ENCODE measurements at regions of chr6 and their contacts with region 1.

Region 1: GRCh38 chr6:26187981-26188635 is 100.9 kb downstream of the HFE start:
- H3K4me3 ChIP-seq: peak overlapping the region; percentile 57
- H3K27ac ChIP-seq: peak overlapping the region; percentile 35; the same call in 1 of the 2 replicates
- H3K4me1 ChIP-seq: no peaks in the 10 kb centered on the region
- CTCF ChIP-seq: no peak

Region 2: DNA sequence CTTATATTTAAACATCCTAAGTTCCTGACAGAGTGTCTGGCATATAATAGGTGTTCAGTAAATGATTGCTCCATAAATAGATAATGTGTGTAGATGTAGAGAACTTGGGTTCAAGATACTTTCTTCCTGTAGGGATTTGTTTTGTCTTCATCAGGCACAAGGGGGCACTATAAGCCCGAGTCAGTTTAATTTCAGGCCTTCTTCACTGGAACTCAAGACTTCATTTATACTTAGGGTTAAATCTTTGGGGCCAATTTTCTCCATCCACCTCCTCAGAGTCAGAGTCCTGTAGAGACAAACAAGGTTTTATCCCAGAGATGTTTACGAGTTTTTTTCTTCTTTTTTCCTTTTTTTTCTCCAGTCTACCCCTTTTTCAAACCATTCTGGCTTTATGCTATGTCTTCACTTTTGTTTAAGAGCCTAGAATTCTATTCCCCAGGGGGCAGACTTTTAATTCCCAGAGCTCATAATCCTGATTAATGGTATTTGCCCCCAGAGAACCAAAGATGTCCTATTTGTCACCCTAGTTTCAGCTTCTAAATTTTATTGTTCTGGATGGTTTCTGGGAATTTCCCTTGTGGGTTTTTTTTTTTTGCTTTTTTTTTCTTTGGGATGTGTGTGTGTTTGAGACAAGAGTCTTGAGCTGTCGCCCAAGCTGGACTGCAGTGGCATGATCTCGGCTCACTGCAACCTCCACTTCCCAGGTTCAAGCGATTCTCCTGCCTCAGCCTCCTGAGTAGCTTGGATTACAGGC is 12.5 kb before region 1 on chr6:
- CTCF ChIA-PET with region 1: interaction called, 12 read pairs
- POLR2A ChIA-PET with region 1: interaction called, 10 read pairs
- H3K4me3 ChIP-seq: no peak overlapping the region
- H3K27ac ChIP-seq: no peak overlapping the region
- H3K4me1 ChIP-seq: no peaks in the 10 kb centered on the region; the same call in 1 of the 2 replicates
- CTCF ChIP-seq: peak; percentile 39; the same call in 1 of the 2 replicates

Region 3: GRCh38 chr6:26204332-26205165 is 16.4 kb after region 1 on chr6:
- CTCF ChIA-PET with region 1: interaction called, 4 read pairs
- POLR2A ChIA-PET with region 1: interaction called, 49 read pairs
- H3K4me3 ChIP-seq: peak overlapping the region; percentile 73
- H3K27ac ChIP-seq: peak overlapping the region; percentile 71
- H3K4me1 ChIP-seq: no peaks in the 10 kb centered on the region
- CTCF ChIP-seq: peak; percentile 81

Region 4: DNA sequence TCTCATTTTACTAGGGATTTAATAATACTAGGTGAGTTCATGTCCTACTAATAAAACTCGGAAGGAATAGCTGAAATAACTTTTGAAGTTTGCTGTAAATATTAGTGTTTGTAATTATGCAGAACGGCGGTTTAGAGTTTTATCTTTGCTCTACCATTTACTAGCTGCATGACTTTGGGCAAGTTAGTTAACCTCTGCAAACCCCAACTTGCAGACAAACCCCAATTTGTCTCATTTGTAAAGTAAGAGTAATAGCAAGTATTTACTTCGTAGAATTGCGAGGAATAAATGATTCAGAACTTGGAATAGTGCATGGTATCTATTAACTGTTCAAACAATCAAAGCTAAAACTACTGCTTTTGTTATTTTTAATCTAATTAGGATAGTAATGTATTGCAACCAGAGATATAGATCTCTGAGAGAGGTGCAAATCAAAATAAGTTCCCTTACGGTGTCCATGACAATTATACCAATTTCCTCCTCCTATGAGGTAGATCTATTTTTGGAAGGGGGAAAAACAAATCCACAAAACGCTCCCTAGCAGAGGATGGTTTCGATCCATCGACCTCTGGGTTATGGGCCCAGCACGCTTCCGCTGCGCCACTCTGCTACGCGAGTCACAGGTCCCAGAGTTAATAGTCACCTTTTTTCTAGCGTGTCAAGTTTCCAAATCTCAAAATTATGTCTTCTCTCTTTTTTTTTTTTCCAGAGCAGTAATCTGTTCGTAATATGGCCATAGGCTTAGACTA is 141.8 kb after region 1 on chr6:
- CTCF ChIA-PET with region 1: interaction called, 3 read pairs
- POLR2A ChIA-PET with region 1: interaction called, 10 read pairs
- H3K4me3 ChIP-seq: peak overlapping the region; percentile 73
- H3K27ac ChIP-seq: no peak overlapping the region
- H3K4me1 ChIP-seq: no peaks in the 10 kb centered on the region; the same call in 1 of the 2 replicates
- CTCF ChIP-seq: no peak

Region 5: DNA sequence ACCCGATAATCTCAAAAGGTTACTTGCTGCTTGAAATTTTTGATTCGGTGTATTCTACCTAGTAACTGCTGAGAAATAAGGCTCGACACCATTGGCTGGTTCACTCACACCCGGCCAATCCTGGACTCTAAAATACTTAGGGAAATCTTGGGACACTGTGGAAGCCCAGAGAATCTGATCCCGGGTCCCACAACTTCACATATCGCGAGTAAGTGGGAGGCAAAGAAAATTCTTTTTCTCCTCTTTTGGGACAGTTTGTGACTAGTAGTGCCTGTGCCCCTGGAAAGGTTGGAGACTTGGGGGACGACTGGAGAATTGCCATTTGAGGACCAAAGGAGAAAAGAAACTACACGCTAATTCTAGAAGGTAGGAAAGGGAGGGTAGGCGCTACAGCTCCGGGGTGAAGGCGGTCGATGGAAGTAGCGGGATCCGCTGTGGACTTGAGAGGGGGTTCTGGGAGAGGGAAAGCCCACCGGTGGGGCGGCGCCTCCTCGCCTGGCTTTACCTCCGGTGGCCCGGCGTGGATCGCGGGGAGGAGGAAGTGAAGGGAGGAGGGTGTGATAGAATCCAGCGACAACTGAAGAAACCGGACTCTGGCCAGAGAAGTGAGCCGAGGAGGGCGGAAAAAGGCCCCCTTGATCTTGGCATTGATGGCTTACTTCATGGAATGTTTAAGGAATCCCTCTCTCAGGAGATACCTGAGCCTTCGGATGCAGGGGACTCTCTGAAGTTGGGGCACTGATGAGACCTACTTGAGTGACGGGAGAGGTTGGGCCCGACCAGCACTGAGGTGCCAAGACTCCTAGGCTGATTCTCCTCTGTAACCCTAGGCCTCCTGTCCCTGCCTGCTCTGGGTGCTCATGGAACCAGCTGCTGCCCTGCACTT is 233.4 kb after region 1 on chr6:
- CTCF ChIA-PET with region 1: no interaction called
- POLR2A ChIA-PET with region 1: no interaction called
- H3K4me3 ChIP-seq: peak overlapping the region; percentile 80
- H3K27ac ChIP-seq: peak overlapping the region; percentile 63; the same call in 1 of the 2 replicates
- H3K4me1 ChIP-seq: no peaks in the 10 kb centered on the region
- CTCF ChIP-seq: no peak

Measured in HEK293 (cell line).